Breast epithelium (tissue), 4 donors: ENCODE measurements at regions of chr2 and their contacts with region 1.

Region 1: GRCh38 chr2:225326969-225327368 is 72.5 kb upstream of the NYAP2 start:
- DNase-seq: no peak
- H3K4me3 ChIP-seq: no peak overlapping the region
- H3K27ac ChIP-seq: no peak overlapping the region
- H3K4me1 ChIP-seq: no peaks in the 10 kb centered on the region
- H3K27me3 ChIP-seq: no peaks in the 10 kb centered on the region
- CTCF ChIP-seq: no peak
- POLR2A ChIP-seq: no peak

Region 2: DNA sequence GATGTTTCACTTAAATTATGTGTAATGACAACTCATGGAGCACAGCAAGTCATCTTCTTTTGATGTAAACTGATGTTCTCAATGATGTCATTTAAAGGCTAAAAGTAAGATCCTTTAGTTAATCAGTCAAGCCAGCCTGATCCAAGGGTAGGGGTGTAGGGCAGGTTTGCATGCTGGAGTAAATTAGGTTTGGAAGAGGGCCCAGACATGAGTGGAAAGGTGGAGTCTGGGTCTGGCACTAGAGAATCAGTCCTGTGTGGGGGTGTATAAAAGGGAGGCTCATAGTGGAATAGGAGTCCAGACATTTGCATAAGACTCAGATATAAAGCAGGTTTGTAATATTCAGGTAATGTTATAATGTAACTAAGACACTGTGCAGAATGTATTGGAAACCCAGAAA is 16.2 kb before region 1 on chr2:
- intact Hi-C with region 1: loop called (anchors 2 kb)
- DNase-seq: no peak
- H3K4me3 ChIP-seq: no peak overlapping the region
- H3K27ac ChIP-seq: no peak overlapping the region
- H3K4me1 ChIP-seq: no peaks in the 10 kb centered on the region
- H3K27me3 ChIP-seq: no peaks in the 10 kb centered on the region
- CTCF ChIP-seq: no peak
- POLR2A ChIP-seq: no peak